A673 (cell line): ENCODE measurements at regions of chr13 and their contacts with region 1.

Region 1: DNA sequence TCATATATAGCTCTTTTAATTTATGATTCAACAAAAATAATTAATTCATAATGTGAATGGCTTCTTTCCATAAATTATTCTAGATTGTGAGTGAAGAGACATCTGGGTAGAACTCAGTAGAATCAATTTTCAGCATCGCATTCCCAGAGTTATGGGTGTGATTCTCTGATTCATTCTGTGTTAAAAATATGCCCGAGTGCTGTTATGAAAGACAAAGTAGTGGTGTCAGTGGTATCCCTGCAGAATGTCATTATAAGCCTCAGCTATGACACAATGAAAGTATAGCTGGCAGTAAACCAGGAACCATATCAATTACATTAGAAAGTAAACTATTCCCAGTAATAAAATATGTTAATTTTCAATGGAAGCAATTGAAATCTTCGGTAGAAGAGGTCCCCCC is 480.5 kb upstream of the SLITRK1 start:
- DNase-seq: no peak
- H3K4me3 ChIP-seq: no peak overlapping the region
- H3K27ac ChIP-seq: no peak overlapping the region
- H3K4me1 ChIP-seq: no peaks in the 10 kb centered on the region
- H3K27me3 ChIP-seq: no peaks in the 10 kb centered on the region
- CTCF ChIP-seq: no peak

Region 2: GRCh38 chr13:83183439-83184149 is 1179.2 kb before region 1 on chr13:
- CTCF ChIA-PET with region 1: no interaction called
- POLR2A ChIA-PET with region 1: interaction called, 16 read pairs
- intact Hi-C with region 1: no loop called
- DNase-seq: no peak
- H3K4me3 ChIP-seq: no peak overlapping the region
- H3K27ac ChIP-seq: no peak overlapping the region
- H3K4me1 ChIP-seq: no peaks in the 10 kb centered on the region
- H3K27me3 ChIP-seq: no peaks in the 10 kb centered on the region
- CTCF ChIP-seq: no peak

Region 3: DNA sequence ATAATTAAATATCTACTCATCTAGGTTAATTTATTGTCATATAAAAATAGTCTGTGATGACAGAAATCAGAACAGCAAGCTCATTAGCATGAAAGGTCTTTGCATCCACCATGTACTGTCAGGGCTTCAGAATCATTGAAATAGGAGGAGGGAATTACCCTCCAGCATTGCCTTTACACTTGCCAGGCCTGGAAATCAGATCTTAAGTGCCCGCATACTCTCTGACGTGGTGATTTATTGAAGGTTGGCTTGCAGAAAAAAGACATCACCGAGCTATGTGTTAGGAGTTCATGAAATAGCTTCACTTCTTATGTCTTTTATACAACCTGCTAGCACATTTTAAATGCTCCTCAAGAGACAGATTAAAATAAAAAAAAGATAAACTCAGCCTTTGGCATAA is 181.2 kb after region 1 on chr13:
- CTCF ChIA-PET with region 1: no interaction called
- POLR2A ChIA-PET with region 1: no interaction called
- intact Hi-C with region 1: no loop called
- DNase-seq: no peak
- H3K4me3 ChIP-seq: no peak overlapping the region
- H3K27ac ChIP-seq: no peak overlapping the region
- H3K4me1 ChIP-seq: no peaks in the 10 kb centered on the region
- H3K27me3 ChIP-seq: no peaks in the 10 kb centered on the region
- CTCF ChIP-seq: no peak